Transverse colon (tissue), 4 donors: ENCODE measurements at regions of chr7 and their contacts with region 1.

Region 1: GRCh38 chr7:81499262-81500116 is 270.4 kb downstream of the HGF start:
- DNase-seq: no peak
- H3K4me3 ChIP-seq: no peak overlapping the region
- H3K27ac ChIP-seq: peak overlapping the region in 2 of 4 donors; percentile 33 to 38
- H3K4me1 ChIP-seq: peaks cover 0 to 12% (median 9%) of the 10 kb centered on the region in 4 donors
- H3K27me3 ChIP-seq: no peaks in the 10 kb centered on the region
- CTCF ChIP-seq: peak; percentile 49 to 67 (median 57)
- EP300 ChIP-seq: no peak
- POLR2A ChIP-seq: no peak

Region 2: GRCh38 chr7:81383848-81384247 is 115.6 kb before region 1 on chr7:
- in situ Hi-C with region 1: no loop called
- intact Hi-C with region 1: no loop called
- DNase-seq: no peak
- H3K4me3 ChIP-seq: no peak overlapping the region
- H3K27ac ChIP-seq: no peak overlapping the region
- H3K4me1 ChIP-seq: no peaks in the 10 kb centered on the region
- H3K27me3 ChIP-seq: no peaks in the 10 kb centered on the region
- CTCF ChIP-seq: no peak
- EP300 ChIP-seq: no peak
- POLR2A ChIP-seq: no peak

Region 3: DNA sequence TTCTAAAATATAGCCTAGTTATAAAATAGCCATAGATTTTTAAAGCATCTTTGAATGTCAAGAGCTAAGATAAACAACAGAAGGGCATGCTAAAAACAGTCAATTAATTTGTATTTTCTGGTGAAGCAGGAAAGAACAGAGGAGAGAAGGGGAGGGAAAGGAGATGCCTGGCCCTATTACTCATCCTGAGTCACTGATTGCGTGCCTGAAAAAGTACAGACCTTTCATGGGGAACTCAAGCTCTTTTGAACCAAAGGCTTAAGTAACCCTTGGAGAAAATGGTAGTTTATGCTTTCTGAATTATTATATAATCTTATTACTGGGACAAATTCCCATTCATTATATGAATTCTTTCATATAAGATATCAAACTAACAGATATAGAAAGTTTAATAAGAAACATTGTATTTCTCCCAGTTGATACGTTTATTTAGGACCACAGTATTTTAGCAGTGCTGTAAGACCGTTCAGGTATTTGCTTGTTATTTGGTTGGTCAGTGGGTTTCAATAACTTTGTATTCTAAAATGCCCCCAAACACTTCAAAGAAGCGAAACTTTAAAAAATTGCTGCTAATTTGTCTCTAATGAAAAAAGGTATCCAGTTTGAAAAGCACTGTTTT is 119.0 kb after region 1 on chr7:
- in situ Hi-C with region 1: loop called in 1 of 4 experiments (anchors 25 kb)
- intact Hi-C with region 1: no loop called
- DNase-seq: no peak
- H3K4me3 ChIP-seq: no peak overlapping the region
- H3K27ac ChIP-seq: no peak overlapping the region
- H3K4me1 ChIP-seq: no peaks in the 10 kb centered on the region
- H3K27me3 ChIP-seq: no peaks in the 10 kb centered on the region
- CTCF ChIP-seq: no peak
- EP300 ChIP-seq: no peak
- POLR2A ChIP-seq: no peak

Region 4: GRCh38 chr7:81802251-81802650 is 302.8 kb after region 1 on chr7:
- in situ Hi-C with region 1: no loop called
- intact Hi-C with region 1: no loop called
- DNase-seq: no peak
- H3K4me3 ChIP-seq: no peak overlapping the region
- H3K27ac ChIP-seq: no peak overlapping the region
- H3K4me1 ChIP-seq: no peaks in the 10 kb centered on the region
- H3K27me3 ChIP-seq: no peaks in the 10 kb centered on the region
- CTCF ChIP-seq: no peak
- EP300 ChIP-seq: no peak
- POLR2A ChIP-seq: no peak

Region 5: GRCh38 chr7:81956520-81956919 is 457.0 kb after region 1 on chr7:
- in situ Hi-C with region 1: loop called in 1 of 4 experiments (anchors 25 kb)
- intact Hi-C with region 1: no loop called
- DNase-seq: no peak
- H3K4me3 ChIP-seq: no peak overlapping the region
- H3K27ac ChIP-seq: no peak overlapping the region
- H3K4me1 ChIP-seq: no peaks in the 10 kb centered on the region
- H3K27me3 ChIP-seq: no peaks in the 10 kb centered on the region
- CTCF ChIP-seq: peak; percentile 16 to 27 (median 22)
- EP300 ChIP-seq: no peak
- POLR2A ChIP-seq: no peak

Region 6: DNA sequence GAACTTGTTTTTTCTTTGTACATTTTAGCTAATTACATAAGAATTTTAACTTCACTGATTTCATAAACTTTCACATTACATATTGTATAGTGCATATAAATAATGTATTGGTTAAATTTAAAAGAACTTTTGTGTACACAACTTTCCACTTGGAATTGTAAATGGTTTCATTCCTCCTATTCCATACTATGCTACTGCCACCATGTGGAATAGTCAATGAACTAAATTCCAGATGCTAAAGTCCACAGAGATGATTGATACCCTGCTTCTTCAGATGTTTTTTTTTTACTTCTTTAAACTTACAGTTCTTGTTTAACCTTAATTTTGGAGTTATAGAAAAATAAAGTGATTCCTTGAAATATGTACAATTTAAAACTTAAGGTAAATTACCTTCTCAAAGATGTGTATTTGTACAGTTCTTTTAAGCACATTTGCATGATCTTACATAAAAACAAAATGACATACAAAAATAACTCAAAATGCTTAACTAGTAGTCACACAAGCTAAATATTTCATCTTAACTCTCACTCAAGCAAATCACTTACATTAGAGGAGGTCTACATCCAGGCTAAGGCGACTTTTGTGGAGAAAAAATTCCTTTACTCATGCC is 518.0 kb after region 1 on chr7:
- in situ Hi-C with region 1: loop called (anchors 25 kb)
- intact Hi-C with region 1: no loop called
- DNase-seq: no peak
- H3K4me3 ChIP-seq: no peak overlapping the region
- H3K27ac ChIP-seq: no peak overlapping the region
- H3K4me1 ChIP-seq: no peaks in the 10 kb centered on the region
- H3K27me3 ChIP-seq: no peaks in the 10 kb centered on the region
- CTCF ChIP-seq: peak in 3 of 5 experiments; percentile 18 to 35 (median 31)
- EP300 ChIP-seq: no peak
- POLR2A ChIP-seq: no peak

Region 7: GRCh38 chr7:82572195-82572880 is 1072.8 kb after region 1 on chr7:
- in situ Hi-C with region 1: loop called in 3 of 4 experiments (anchors 10 to 25 kb)
- intact Hi-C with region 1: no loop called
- DNase-seq: peak; percentile 83
- H3K4me3 ChIP-seq: no peak overlapping the region
- H3K27ac ChIP-seq: no peak overlapping the region
- H3K4me1 ChIP-seq: no peaks in the 10 kb centered on the region
- H3K27me3 ChIP-seq: no peaks in the 10 kb centered on the region
- CTCF ChIP-seq: peak; percentile 75 to 90 (median 86)
- EP300 ChIP-seq: no peak
- POLR2A ChIP-seq: no peak

Region 8: GRCh38 chr7:82578430-82578829 is 1078.9 kb after region 1 on chr7:
- in situ Hi-C with region 1: loop called in 3 of 4 experiments (anchors 10 to 25 kb)
- intact Hi-C with region 1: no loop called
- DNase-seq: no peak
- H3K4me3 ChIP-seq: no peak overlapping the region
- H3K27ac ChIP-seq: no peak overlapping the region
- H3K4me1 ChIP-seq: no peaks in the 10 kb centered on the region
- H3K27me3 ChIP-seq: no peaks in the 10 kb centered on the region
- CTCF ChIP-seq: no peak
- EP300 ChIP-seq: no peak
- POLR2A ChIP-seq: no peak